Activated T-helper 1 cell treated with anti-CD3 and anti-CD28 coated beads, Interleukin-12 subunit alpha, Interleukin-12 subunit beta, Interleukin-2, Interleukin-4 antibody, amounts not matched to agents 30 ng/mL and 10 ng/mL and 1 ng/mL, durations not matched to agents 14 hours and 24 hours and 36 hours (primary cell): ENCODE measurements at regions of chr15 and their contacts with region 1.

Region 1: DNA sequence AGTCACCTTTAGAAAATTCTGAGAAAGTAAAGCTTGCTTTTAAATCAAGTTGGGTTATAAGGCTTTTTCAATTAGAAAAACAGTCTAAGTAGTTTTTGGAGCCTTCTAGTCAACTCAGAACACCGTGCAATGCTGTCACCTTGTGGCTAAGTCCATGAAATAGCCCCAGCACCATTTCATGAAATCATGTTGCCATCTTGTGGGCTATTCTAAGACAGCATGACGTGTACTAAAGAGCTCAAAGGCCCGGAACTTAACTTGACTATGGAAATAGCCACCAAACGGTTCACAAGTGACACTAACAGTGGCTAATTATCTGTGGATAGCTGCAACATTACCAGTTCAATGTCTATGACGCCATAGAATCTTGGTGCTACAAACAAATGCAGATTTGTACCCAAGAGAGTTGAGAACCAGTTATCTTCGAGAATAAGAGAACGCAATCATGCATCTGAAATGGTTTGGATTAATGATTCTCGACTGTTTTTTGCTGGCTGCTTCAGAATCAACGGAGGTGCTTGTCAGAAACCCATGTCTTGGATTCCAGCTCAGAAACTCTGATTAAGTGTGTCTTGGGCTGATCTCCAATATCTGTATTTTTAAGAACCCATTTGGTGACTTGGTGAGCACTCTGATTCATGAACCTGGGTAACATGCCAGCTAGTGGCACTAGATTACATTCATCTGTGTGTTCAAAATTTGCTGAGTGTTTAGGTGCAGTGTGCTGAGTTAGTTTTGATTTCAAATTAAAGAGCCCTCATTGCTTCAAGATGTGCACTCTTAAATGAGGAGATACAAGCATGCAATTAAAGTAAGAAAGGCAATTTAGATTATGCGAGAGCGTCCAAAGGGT is 111.2 kb upstream of the MCTP2 start:
- DNase-seq: peak; percentile 44
- H3K4me3 Mint-ChIP-seq: no peak overlapping the region
- H3K27ac Mint-ChIP-seq: no peak overlapping the region
- H3K4me1 Mint-ChIP-seq: peaks cover 2% of the 10 kb centered on the region
- H3K27me3 Mint-ChIP-seq: peaks cover 14% of the 10 kb centered on the region

Region 2: GRCh38 chr15:93030430-93031105 is 1089.6 kb before region 1 on chr15:
- intact Hi-C with region 1: loop called (anchors 1 kb)
- DNase-seq: peak; percentile 44
- H3K4me3 Mint-ChIP-seq: no peak overlapping the region
- H3K27ac Mint-ChIP-seq: no peak overlapping the region
- H3K4me1 Mint-ChIP-seq: peaks cover 22% of the 10 kb centered on the region
- H3K27me3 Mint-ChIP-seq: no peaks in the 10 kb centered on the region

Region 3: GRCh38 chr15:93035953-93036800 is 1084.0 kb before region 1 on chr15:
- intact Hi-C with region 1: loop called (anchors 1 kb)
- DNase-seq: no peak
- H3K4me3 Mint-ChIP-seq: peak overlapping the region; percentile 63
- H3K27ac Mint-ChIP-seq: no peak overlapping the region
- H3K4me1 Mint-ChIP-seq: peaks cover 6% of the 10 kb centered on the region
- H3K27me3 Mint-ChIP-seq: peaks cover 4% of the 10 kb centered on the region

Region 4: DNA sequence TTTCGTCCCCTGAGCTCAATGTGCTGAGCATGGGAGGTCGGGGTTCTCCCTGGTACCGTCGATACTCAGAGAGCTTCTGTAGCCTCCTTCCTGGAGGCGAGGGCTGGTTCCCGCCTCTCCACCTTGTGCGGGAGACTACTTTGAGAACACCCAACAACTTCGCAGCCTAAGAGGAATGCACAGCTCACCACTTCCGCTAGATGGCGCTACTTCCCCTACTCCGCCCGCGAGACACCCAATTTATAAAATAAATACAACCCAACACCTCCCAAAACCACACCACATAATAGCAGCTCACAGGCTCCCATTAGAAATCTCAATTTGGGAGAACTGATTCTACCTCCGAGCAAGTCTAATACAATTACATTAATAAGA is 1032.3 kb before region 1 on chr15:
- intact Hi-C with region 1: loop called (anchors 1 kb)
- DNase-seq: peak; percentile 53
- H3K4me3 Mint-ChIP-seq: peak overlapping the region; percentile 83
- H3K27ac Mint-ChIP-seq: no peak overlapping the region
- H3K4me1 Mint-ChIP-seq: peaks cover 7% of the 10 kb centered on the region
- H3K27me3 Mint-ChIP-seq: peaks cover 59% of the 10 kb centered on the region

Region 5: GRCh38 chr15:93997084-93997918 is 122.8 kb before region 1 on chr15:
- intact Hi-C with region 1: loop called (anchors 1 kb)
- DNase-seq: no peak
- H3K4me3 Mint-ChIP-seq: no peak overlapping the region
- H3K27ac Mint-ChIP-seq: no peak overlapping the region
- H3K4me1 Mint-ChIP-seq: no peaks in the 10 kb centered on the region
- H3K27me3 Mint-ChIP-seq: peaks cover 20% of the 10 kb centered on the region